ENCODE measurements at regions of chr5 and their contacts with region 1.

Region 1: DNA sequence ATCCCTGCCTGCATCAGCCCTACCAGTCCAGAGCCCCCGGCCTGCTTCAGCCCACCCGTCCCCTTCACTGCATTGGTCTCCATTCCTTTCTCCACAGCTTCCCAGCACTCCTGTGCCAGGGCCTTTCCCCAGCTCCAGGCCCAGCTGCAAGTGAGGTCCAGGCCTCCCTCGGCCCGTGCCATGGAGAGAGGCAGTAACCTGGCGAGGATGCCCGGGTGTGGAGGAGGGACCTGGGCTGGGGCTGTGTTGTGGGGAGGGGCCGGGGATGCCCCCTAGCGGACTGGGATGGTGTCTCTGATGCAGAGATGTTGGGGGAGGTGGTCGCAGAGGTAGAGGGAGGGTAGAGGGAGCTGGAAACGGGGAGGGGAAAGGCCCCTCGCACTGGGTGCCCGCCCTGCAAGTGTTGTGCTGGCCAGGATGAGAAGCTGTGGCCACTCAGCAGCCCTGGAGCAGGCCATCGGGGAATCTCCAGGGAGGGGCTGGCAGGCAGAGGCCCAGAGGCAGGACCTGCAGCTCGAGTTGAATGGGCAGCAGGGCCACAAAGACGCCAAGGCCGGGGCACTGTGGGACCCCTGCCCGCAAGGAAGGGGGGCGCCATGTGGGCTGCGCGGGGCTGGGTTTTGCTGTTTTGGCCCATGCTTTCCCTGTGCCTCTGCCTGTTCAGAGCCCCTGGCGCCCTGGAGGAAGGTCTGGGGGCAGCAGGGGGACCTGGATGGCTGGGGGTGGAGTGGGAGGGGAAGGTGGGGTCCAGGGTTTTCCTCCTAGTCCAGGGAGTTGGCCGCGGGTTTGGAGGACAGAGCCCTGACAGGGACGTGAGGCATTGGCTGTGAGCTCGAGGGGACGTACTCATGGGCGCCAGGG is 26.0 kb upstream of the NKD2 start:
- DNase-seq: peak; percentile 38 to 88
- H3K4me3 ChIP-seq: no peak overlapping the region
- H3K27ac ChIP-seq: no peak overlapping the region
- H3K4me1 ChIP-seq: peaks cover 0 to 4% (median under 1%) of the 10 kb centered on the region in 4 experiments; a peak in 4 of 7 replicates
- H3K27me3 ChIP-seq: no peaks in the 10 kb centered on the region
- CTCF ChIP-seq: peak; percentile 76 to 88 (median 78)
- EP300 ChIP-seq: no peak
- POLR2A ChIP-seq: no peak
- RAD21 ChIP-seq: peak; percentile 43 to 68

Region 2: DNA sequence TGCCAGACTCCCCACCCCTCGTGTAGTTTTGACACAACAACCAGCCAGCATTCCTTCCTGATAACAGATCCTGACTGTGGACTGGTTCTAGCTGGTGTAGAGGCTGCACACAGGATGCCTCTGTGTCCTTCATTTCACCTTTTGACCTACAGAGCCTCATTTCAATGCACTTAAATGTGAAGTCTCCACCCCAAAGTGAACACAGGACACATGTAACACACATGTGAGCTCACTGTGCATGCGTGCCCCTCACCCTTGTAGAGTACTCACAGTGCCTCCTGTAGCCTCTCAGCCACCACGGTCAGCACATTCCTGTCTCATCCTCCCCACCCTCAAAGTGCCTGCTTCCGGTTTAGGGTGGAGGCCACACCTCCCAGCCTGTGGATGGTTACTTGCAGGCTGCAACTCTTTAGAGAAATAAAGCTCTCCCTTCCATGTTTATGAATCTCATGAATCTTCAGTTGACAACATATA is 14.4 kb after region 1 on chr5:
- CTCF ChIA-PET with region 1: interaction called, 25 read pairs
- POLR2A ChIA-PET with region 1: interaction called, 3 read pairs
- DNase-seq: no peak
- H3K4me3 ChIP-seq: no peak overlapping the region
- H3K27ac ChIP-seq: no peak overlapping the region
- H3K4me1 ChIP-seq: peaks cover 0 to 3% (median 0%) of the 10 kb centered on the region in 4 experiments; a peak in 2 of 7 replicates
- H3K27me3 ChIP-seq: no peaks in the 10 kb centered on the region
- CTCF ChIP-seq: no peak
- EP300 ChIP-seq: no peak
- POLR2A ChIP-seq: no peak
- RAD21 ChIP-seq: no peak

Measured in H1 (cell line).